Endothelial cell of umbilical vein (primary cell): ENCODE measurements at regions of chr4 and their contacts with region 1.

Region 1: DNA sequence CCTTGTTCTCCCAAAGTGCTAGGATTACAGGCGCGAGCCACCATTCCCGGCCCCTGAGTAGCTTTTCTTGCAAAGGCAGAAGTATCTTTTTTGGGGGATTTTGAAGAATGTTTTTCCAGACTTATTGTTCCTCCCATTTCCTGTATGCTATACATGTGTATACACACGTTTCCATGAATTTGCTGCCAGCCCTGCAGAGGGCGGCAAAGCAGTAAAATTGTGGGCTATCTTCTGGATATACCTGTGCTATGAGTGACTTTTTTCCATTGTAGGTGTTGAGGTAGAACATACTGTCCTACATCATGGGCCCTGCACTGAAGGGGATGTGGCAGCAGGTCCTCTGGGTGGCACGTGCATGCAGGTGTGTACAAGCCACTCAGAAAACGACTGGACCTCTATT is 16.9 kb upstream of the MED28 start:
- DNase-seq: peak; percentile 48
- H3K4me3 ChIP-seq: no peak overlapping the region
- H3K27ac ChIP-seq: no peak overlapping the region
- H3K4me1 ChIP-seq: no peaks in the 10 kb centered on the region
- H3K27me3 ChIP-seq: no peaks in the 10 kb centered on the region
- CTCF ChIP-seq: peak; percentile 32 to 38
- POLR2A ChIP-seq: no peak

Region 2: DNA sequence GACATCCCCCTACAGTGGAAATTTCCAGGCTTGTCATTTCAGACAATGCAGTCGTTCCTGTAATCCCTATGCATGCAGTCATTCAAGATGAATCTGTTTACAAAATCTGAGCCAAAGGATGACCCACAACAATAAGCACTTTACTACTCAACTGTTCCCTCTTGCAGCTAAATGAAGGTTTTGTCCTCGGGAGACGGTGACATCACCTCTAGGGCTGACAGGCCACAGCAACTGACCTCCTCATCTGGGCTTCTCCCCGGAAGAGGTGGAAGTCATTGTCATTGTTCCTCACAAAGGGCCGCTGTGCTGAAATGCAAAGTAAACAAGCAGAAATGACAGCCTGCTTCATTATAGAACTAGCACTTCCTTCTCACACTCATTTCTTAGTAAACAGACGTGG is 53.3 kb before region 1 on chr4:
- CTCF ChIA-PET with region 1: no interaction called
- POLR2A ChIA-PET with region 1: no interaction called
- dilution Hi-C with region 1: no loop called
- intact Hi-C with region 1: loop called (anchors 1 kb)
- DNase-seq: no peak
- H3K4me3 ChIP-seq: no peak overlapping the region
- H3K27ac ChIP-seq: no peak overlapping the region
- H3K4me1 ChIP-seq: peaks cover 4% of the 10 kb centered on the region
- H3K27me3 ChIP-seq: peaks cover 2 to 3% of the 10 kb centered on the region in 2 experiments
- CTCF ChIP-seq: no peak
- POLR2A ChIP-seq: no peak